ENCODE measurements at regions of chr1 and their contacts with region 1.

Region 1: DNA sequence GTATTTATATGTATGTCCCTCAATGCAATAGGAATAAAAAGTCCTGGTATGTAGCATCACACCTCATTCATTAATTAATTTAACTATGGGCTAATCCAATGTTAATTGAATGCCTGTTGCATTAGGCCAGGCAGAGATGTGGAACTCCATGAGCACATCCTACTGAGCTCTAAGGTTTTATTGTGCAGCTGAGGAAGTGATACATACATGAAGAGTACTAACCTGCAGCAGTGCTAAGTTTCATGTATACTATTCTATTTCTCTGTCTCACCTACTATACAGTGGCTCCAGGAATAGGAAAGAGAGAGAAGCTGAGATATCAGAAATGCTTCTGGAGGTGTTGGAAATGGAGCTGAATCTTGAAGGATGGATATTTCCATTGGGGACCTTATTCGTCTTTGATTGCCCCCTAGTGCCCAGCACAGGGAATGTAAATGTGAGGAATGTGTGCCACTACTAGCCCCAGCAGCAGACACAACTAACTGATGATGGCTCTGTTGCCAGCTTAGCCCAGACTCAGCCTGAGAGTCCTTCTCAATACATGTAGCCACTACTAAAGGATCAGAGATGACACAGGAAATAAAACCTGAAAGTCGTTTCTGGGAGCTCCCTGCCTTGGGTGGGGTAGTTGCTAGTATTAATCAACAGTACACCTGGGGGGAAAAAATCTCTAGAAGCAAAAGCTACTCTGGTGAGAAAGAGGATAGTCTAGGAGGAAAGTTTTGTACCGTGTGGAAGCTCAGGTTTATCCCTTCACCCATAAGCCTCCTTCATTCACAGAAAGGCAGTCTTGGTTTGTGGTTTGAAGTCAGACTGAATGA is 173.3 kb upstream of the FOXD3 start:
- H3K4me3 ChIP-seq: no peak overlapping the region
- H3K27ac ChIP-seq: no peak overlapping the region
- H3K4me1 ChIP-seq: no peaks in the 10 kb centered on the region
- CTCF ChIP-seq: no peak

Region 2: DNA sequence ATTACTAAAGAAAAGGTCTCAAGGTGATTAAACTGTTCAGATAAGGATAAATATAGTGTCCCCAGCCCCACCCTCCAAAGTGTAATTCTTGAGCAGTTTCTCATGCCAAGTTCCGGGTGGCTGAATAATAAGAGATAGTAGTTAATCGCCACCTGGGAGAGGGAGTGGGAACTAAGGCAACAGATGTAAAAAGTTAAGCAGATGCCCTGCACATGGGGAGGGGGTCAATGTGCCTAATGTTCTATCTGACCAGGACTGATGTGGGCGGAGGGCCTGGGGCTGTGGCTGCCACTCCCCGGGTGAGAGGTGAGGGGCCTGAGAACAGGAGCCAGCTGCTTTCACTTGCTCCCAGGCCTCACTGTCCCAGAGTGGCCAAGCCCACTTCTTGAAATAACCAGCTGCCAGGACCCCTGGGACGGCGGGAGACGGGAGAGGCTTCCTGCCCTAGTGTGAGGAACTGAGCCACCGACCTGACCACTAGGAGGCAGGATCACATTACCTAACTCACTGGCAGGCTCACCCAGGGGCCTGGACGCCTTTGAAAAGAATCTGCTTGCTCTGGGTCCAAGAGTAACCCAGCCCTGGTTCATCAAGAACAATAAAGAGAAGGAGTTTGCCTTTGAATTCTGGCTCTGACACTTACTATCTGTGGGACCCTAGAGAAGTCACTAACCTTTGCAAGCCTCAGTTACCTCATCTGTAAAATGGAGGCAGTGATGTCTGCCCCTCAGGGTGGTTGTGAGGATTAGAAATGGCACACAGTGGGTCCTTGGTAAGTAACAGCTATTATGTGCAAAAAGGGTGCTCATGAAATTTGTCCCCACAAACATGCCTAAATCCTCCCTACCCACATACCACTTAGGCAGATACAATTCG is 185.9 kb before region 1 on chr1:
- CTCF ChIA-PET with region 1: interaction called, 15 read pairs
- POLR2A ChIA-PET with region 1: no interaction called
- H3K4me3 ChIP-seq: no peak overlapping the region
- H3K27ac ChIP-seq: no peak overlapping the region
- H3K4me1 ChIP-seq: no peaks in the 10 kb centered on the region
- CTCF ChIP-seq: 0 out of 2 replicates have a peak, but pooled peaks have one; percentile 17

Region 3: DNA sequence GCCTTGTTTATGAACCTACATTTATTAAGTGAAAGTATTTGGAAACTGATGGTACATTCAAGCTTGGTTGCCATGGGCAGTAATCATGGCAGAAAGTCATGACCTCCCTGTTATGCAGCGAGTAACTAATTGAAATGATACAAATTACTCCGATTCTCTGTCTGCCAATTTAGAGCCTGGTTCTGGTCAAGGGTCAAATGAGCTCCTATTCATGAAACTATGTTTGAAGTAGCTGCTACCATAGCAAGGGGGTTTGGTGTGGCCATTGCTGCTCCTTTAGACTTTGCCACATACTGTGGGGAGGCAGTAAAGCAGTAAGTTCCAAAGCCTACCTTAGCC is 13.9 kb before region 1 on chr1:
- CTCF ChIA-PET with region 1: interaction called, 15 read pairs
- POLR2A ChIA-PET with region 1: no interaction called
- H3K4me3 ChIP-seq: no peak overlapping the region
- H3K27ac ChIP-seq: no peak overlapping the region
- H3K4me1 ChIP-seq: no peaks in the 10 kb centered on the region
- CTCF ChIP-seq: no peak

Measured in HEK293 (cell line).